IMR-90 (cell line): ENCODE measurements at regions of chr5 and their contacts with region 1.

Region 1: GRCh38 chr5:78648359-78649210 is at the start of gene LHFPL2:
- DNase-seq: peak; percentile 68
- ATAC-seq: peak; percentile 84
- H3K4me3 ChIP-seq: peak within 1 kb of the TSS; percentile 95
- H3K27ac ChIP-seq: peak within 1 kb of the TSS; percentile 96
- H3K4me1 ChIP-seq: peaks cover 14% of the 10 kb centered on the region
- H3K27me3 ChIP-seq: no peaks in the 10 kb centered on the region
- CTCF ChIP-seq: no peak
- POLR2A ChIP-seq: peak; percentile 63
- RAD21 ChIP-seq: no peak
- total RNA-seq, gene LHFPL2: 11.1 and 11.3 TPM in 2 replicates

Region 2: GRCh38 chr5:78359831-78360673 is 288.5 kb before region 1 on chr5 and contains the start of gene SCAMP1:
- CTCF ChIA-PET with region 1: no interaction called
- POLR2A ChIA-PET with region 1: no interaction called
- dilution Hi-C with region 1: no loop called
- in situ Hi-C with region 1: no loop called
- intact Hi-C with region 1: loop called (anchors 5 kb)
- DNase-seq: peak; percentile 92
- ATAC-seq: peak; percentile 96
- H3K4me3 ChIP-seq: peak within 1 kb of the TSS; percentile 88
- H3K27ac ChIP-seq: peak within 1 kb of the TSS; percentile 89
- H3K4me1 ChIP-seq: no peaks in the 10 kb centered on the region
- H3K27me3 ChIP-seq: no peaks in the 10 kb centered on the region
- CTCF ChIP-seq: peak; percentile 38
- POLR2A ChIP-seq: peak; percentile 73; the same call in 1 of the 2 replicates
- RAD21 ChIP-seq: peak; percentile 40
- total RNA-seq, gene SCAMP1: 89.4 and 114 TPM in 2 replicates

Region 3: DNA sequence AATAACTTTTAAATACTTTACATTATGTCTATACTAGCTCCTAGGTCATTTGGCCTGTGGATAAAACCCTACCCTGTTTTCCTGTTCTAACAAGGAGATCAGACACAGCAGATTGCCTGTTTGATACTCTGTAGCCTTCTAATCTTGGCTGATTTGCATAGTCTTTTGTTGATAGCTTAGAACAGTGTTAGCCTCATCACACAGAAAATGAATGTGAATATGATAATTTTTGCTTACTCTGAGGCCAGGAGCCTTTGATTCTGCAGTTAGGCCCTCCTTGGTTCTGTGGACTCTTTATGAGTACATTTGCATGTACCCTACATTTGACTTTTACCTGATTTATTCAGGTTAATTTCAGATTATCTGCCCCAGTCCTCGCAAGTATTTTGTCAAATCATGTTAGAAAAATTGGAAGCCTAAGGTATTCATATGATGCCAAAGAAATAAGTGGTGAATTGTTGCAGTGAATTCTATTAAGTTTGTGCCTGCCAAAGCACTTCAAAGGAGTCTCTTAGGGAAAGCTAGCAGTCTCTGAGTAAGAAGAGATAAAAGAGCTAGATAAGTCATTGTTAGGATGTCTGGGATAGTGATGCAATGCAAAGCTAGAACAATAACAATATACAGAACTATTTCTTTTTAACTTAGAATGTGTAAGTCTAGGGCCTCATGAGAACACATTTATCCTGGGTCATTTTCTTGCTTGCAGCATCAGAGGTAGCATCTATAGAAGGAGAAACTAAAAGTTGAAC is 231.7 kb before region 1 on chr5:
- CTCF ChIA-PET with region 1: no interaction called
- POLR2A ChIA-PET with region 1: no interaction called
- dilution Hi-C with region 1: no loop called
- in situ Hi-C with region 1: no loop called
- intact Hi-C with region 1: no loop called
- DNase-seq: peak; percentile 43
- ATAC-seq: no peak
- H3K4me3 ChIP-seq: no peak overlapping the region
- H3K27ac ChIP-seq: no peak overlapping the region
- H3K4me1 ChIP-seq: no peaks in the 10 kb centered on the region; the same call in 1 of the 2 replicates
- H3K27me3 ChIP-seq: no peaks in the 10 kb centered on the region
- CTCF ChIP-seq: no peak
- POLR2A ChIP-seq: no peak
- RAD21 ChIP-seq: no peak

Region 4: DNA sequence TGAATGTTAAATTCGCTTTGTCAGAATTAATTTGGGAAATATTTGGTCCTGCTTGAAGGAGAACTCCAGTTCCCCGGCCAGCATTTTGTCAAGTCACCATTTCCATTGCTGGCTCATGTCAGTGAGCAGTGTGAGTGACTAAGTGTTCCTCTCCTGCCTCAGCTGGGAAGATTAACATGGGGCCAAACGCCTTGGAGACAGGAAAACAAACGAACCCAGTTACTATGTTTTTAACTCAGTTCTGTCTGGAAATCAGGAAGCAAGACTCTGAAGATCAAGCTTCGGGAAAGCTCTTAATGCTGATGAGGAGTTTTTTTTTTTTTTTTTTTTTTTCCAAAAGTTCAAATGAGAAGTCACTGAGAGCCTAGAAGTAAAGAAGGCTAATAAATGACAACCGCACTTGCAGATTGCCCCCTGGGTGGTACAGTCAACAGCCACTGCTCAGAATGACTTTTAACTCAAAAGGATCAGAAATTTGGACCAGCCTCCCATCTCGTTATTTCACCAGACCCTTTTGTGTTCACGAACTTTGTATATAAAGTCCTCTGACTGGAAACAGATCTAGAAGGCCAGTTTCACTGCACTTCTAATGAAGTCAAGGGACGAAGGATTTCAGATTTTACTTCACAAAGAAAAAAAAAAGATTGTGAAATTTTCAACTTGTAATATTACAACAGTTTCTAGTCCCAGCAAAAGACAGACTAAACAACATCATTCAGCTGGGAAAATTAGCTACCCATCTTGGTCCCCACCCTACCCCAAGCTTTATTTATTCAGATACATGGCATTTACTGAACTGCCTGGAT is 121.3 kb before region 1 on chr5:
- CTCF ChIA-PET with region 1: no interaction called
- POLR2A ChIA-PET with region 1: no interaction called
- dilution Hi-C with region 1: no loop called
- in situ Hi-C with region 1: no loop called
- intact Hi-C with region 1: loop called (anchors 5 kb)
- DNase-seq: peak; percentile 94
- ATAC-seq: peak; percentile 36
- H3K4me3 ChIP-seq: no peak overlapping the region
- H3K27ac ChIP-seq: peak overlapping the region; percentile 76; the same call in 1 of the 2 replicates
- H3K4me1 ChIP-seq: peaks cover 31% of the 10 kb centered on the region
- H3K27me3 ChIP-seq: no peaks in the 10 kb centered on the region
- CTCF ChIP-seq: no peak
- POLR2A ChIP-seq: peak; percentile 34
- RAD21 ChIP-seq: no peak

Region 5: DNA sequence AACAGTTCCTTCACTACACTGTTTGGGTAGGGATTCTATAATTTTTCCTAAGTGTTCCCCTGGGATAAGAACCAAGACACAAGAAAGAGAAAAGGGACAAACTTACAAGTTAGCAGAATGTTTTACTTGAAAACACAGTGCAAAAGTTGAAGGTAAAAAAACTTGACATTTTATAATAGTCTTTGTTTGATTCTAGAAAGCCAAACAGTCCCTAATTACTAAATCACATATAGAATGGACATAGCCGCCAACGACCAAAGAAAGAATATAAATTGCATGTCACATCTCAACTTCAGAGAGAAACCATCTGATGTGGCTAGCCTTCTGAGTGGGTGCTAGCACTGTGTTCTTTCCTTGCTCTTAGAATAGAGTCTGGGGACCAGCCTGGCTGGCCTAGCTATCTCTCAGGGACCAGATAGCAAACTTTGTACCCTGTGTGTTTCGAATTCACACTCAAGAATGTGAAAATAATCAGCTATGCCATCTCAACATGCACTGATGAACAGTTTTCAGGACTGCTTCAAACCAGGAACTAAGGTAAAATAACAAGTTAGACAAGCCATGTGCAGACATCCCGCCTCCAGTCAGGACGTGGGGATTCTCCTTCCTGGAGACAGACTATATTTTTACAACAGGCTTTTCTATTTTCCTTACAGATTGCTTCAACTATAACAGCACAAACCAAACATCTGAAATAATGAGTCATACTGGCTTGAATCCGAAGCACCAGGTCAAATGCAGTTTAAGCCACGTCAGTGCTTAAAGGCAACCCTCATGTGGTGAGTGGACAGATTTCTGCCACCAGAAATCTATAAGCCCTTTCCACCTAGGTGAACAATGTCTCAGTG is 53.8 kb before region 1 on chr5:
- CTCF ChIA-PET with region 1: no interaction called
- POLR2A ChIA-PET with region 1: no interaction called
- dilution Hi-C with region 1: no loop called
- in situ Hi-C with region 1: no loop called
- intact Hi-C with region 1: loop called (anchors 5 kb)
- DNase-seq: peak; percentile 100
- ATAC-seq: peak; percentile 71
- H3K4me3 ChIP-seq: no peak overlapping the region
- H3K27ac ChIP-seq: peak overlapping the region; percentile 81
- H3K4me1 ChIP-seq: peaks cover 40% of the 10 kb centered on the region
- H3K27me3 ChIP-seq: no peaks in the 10 kb centered on the region
- CTCF ChIP-seq: 0 out of 2 replicates have a peak, but pooled peaks have one; percentile 17
- POLR2A ChIP-seq: peak; percentile 61
- RAD21 ChIP-seq: peak; percentile 11; the same call in 1 of the 2 replicates

Region 6: GRCh38 chr5:78841767-78842166 is 193.2 kb after region 1 on chr5:
- CTCF ChIA-PET with region 1: no interaction called
- POLR2A ChIA-PET with region 1: no interaction called
- dilution Hi-C with region 1: no loop called
- in situ Hi-C with region 1: no loop called
- intact Hi-C with region 1: no loop called
- DNase-seq: peak; percentile 32
- ATAC-seq: no peak
- H3K4me3 ChIP-seq: no peak overlapping the region
- H3K27ac ChIP-seq: no peak overlapping the region
- H3K4me1 ChIP-seq: peaks cover 4% of the 10 kb centered on the region
- H3K27me3 ChIP-seq: no peaks in the 10 kb centered on the region
- CTCF ChIP-seq: no peak
- POLR2A ChIP-seq: no peak
- RAD21 ChIP-seq: no peak

Region 7: DNA sequence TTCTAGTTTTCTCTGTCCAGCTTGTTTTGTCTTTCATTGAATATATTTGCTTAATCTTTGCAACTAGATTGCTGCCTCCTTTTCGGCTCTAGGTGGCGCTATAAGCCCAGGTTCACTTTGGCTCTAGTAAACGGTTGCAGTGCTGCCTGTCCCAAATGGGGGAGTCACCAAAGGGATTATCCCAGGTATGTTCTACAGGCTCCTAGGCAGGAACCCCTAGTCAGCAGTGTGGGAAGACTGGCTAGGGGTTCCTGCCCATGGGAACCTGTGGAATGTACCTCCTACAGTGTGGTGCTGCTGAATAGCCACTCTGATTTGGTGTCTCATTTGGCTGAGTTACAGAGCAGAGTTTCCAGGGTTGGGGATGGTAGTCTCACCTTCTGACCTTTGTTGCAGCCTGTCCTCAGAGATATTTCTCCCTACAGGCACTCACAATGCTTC is 251.4 kb after region 1 on chr5:
- CTCF ChIA-PET with region 1: no interaction called
- POLR2A ChIA-PET with region 1: no interaction called
- dilution Hi-C with region 1: no loop called
- in situ Hi-C with region 1: no loop called
- intact Hi-C with region 1: loop called (anchors 5 kb)
- DNase-seq: peak; percentile 67
- ATAC-seq: peak; percentile 19; the same call in 1 of the 2 replicates
- H3K4me3 ChIP-seq: no peak overlapping the region
- H3K27ac ChIP-seq: no peak overlapping the region
- H3K4me1 ChIP-seq: peaks cover 9% of the 10 kb centered on the region
- H3K27me3 ChIP-seq: no peaks in the 10 kb centered on the region
- CTCF ChIP-seq: peak; percentile 85
- POLR2A ChIP-seq: peak; percentile 39; the same call in 1 of the 2 replicates
- RAD21 ChIP-seq: peak; percentile 93